ENCODE measurements at regions of chr1 and their contacts with region 1.

Region 1: GRCh38 chr1:53413175-53414001 is 45.8 kb upstream of the DMRTB1 start:
- DNase-seq: peak; percentile 82
- H3K4me3 Mint-ChIP-seq: peak overlapping the region; percentile 40
- H3K27ac Mint-ChIP-seq: peak overlapping the region; percentile 89
- H3K4me1 Mint-ChIP-seq: peaks cover 64% of the 10 kb centered on the region
- H3K27me3 Mint-ChIP-seq: no peaks in the 10 kb centered on the region

Region 2: GRCh38 chr1:53220171-53220961 is 193.0 kb before region 1 on chr1 and contains the start of gene CZIB:
- CTCF ChIA-PET with region 1: no interaction called
- POLR2A ChIA-PET with region 1: no interaction called
- intact Hi-C with region 1: loop called (anchors 2 kb)
- DNase-seq: peak; percentile 97
- H3K4me3 Mint-ChIP-seq: peak within 1 kb of the TSS; percentile 89
- H3K27ac Mint-ChIP-seq: peak within 1 kb of the TSS; percentile 95
- H3K4me1 Mint-ChIP-seq: peaks cover 21% of the 10 kb centered on the region
- H3K27me3 Mint-ChIP-seq: no peaks in the 10 kb centered on the region
- total RNA-seq, gene CZIB: 34.0 to 37.4 TPM

Region 3: DNA sequence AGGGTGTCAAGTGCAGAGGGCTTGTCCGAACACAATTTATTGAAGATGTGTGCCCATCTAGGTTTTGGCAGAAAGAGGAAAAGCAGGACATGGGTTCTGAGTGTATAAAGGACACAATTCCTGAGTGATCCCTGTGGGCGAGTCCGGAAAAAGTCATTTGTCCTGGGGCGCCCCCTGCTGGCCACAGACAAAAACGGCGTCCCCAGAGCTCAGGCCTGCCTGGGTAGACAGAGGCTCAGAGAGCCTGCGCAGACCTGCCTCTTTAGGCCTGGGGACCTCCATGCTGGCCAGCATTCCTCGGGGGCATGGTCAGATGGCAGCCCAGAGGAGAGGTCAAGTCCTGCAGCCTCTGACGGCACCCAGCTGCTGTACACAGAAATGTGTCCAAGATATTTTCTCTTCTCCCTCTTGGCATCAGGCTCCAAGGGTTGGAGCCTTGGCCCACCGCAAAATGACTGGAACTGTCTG is 20.0 kb before region 1 on chr1:
- CTCF ChIA-PET with region 1: interaction called, 11 read pairs
- POLR2A ChIA-PET with region 1: no interaction called
- intact Hi-C with region 1: no loop called
- DNase-seq: peak; percentile 80
- H3K4me3 Mint-ChIP-seq: no peak overlapping the region
- H3K27ac Mint-ChIP-seq: no peak overlapping the region
- H3K4me1 Mint-ChIP-seq: peaks cover 2% of the 10 kb centered on the region
- H3K27me3 Mint-ChIP-seq: no peaks in the 10 kb centered on the region

Region 4: GRCh38 chr1:53442299-53442698 is 28.9 kb after region 1 on chr1:
- CTCF ChIA-PET with region 1: no interaction called
- POLR2A ChIA-PET with region 1: no interaction called
- intact Hi-C with region 1: no loop called
- DNase-seq: no peak
- H3K4me3 Mint-ChIP-seq: no peak overlapping the region
- H3K27ac Mint-ChIP-seq: no peak overlapping the region
- H3K4me1 Mint-ChIP-seq: no peaks in the 10 kb centered on the region
- H3K27me3 Mint-ChIP-seq: no peaks in the 10 kb centered on the region

Measured in activated CD4-positive, alpha-beta memory T cell treated with anti-CD3 and anti-CD28 coated beads for 36 hours (primary cell).